Activated CD8-positive, alpha-beta T cell treated with anti-CD3 and anti-CD28 coated beads for 36 hours (primary cell): ENCODE measurements at regions of chr10 and their contacts with region 1.

Region 1: GRCh38 chr10:70549962-70550458 is 52.5 kb downstream of the PRF1 start:
- DNase-seq: peak; percentile 87
- ATAC-seq: peak; percentile 96
- H3K4me3 Mint-ChIP-seq: no peak overlapping the region
- H3K27ac Mint-ChIP-seq: no peak overlapping the region
- H3K4me1 Mint-ChIP-seq: no peaks in the 10 kb centered on the region
- H3K27me3 Mint-ChIP-seq: no peaks in the 10 kb centered on the region
- CTCF ChIP-seq: peak; percentile 86

Region 2: DNA sequence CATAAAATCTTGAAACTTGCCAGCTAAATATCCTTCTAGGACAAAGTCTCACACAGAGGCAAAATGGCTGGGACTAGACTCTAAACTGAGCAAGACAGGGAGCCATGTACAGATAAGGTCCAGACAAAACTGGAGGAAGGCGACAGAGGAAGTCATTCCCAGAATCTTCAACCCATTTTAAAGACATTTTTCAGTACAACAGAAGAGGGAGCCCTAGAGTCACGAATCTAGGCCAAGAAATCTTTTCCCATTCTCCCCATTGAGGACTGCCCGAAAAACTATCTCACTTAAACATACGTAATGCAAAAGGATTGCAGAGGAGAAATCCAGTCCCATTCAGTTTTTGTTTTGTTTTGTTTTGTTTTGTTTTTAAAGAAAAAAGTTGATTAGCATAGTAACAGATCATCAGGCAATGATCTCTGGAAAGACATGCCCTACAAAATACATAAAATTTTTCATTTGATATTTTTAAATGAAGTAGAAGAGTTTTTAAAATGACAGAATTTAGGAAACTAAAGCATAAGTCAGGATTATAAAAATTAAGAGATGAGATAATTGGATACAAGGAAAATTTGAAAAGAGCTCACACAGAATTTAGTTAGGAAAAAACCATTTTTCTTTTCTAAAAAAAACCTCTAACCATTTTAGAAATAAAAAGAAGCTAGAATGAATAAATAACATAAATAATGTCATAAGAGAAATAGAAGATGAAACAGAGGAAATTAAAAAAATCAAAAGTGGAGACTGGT is 69.4 kb after region 1 on chr10:
- CTCF ChIA-PET with region 1: interaction called, 3 read pairs
- POLR2A ChIA-PET with region 1: no interaction called
- intact Hi-C with region 1: loop called (anchors 10 kb)
- DNase-seq: no peak
- ATAC-seq: no peak
- H3K4me3 Mint-ChIP-seq: no peak overlapping the region
- H3K27ac Mint-ChIP-seq: peak overlapping the region; percentile 81
- H3K4me1 Mint-ChIP-seq: peaks cover 47% of the 10 kb centered on the region
- H3K27me3 Mint-ChIP-seq: no peaks in the 10 kb centered on the region
- CTCF ChIP-seq: peak; percentile 82

Region 3: DNA sequence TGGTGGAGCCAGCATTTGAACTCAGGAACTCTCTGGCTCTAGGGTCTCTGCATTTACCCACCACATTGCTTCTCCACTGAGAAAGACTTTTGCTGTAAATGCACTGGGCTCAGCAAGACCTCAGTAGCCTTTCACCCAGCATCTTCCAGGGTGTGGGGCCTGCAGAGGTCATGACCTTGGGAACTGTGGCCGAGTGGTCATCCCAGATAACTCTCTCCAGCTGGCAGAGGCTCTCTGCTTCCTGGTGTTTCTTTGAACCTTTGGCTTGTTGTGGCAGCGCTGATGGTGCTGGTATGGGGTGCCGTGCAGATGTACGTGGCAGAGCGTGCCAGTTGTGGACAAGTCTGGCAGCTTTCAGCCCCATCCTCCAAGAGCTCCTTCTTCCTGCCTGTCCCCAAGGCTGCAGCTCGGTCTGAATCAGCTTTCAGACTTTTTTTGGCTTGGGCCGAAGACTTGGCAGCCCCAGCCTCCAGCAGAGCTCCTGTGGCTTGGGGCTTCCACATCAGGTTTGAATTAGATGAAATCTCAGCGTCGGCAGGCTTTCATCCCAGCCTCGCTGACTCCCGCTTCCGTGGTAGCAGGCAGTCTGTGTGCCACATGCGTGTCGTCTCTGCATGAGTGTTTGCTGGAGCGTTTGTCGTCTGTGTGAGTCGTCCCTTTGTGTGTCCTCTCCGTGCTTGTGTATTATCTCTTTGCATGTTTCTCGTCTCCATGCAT is 143.8 kb after region 1 on chr10:
- CTCF ChIA-PET with region 1: no interaction called
- POLR2A ChIA-PET with region 1: no interaction called
- intact Hi-C with region 1: no loop called
- DNase-seq: no peak
- ATAC-seq: no peak
- H3K4me3 Mint-ChIP-seq: no peak overlapping the region
- H3K27ac Mint-ChIP-seq: no peak overlapping the region
- H3K4me1 Mint-ChIP-seq: no peaks in the 10 kb centered on the region
- H3K27me3 Mint-ChIP-seq: no peaks in the 10 kb centered on the region
- CTCF ChIP-seq: no peak